BJ (cell line): ENCODE measurements at regions of chr1 and their contacts with region 1.

Region 1: DNA sequence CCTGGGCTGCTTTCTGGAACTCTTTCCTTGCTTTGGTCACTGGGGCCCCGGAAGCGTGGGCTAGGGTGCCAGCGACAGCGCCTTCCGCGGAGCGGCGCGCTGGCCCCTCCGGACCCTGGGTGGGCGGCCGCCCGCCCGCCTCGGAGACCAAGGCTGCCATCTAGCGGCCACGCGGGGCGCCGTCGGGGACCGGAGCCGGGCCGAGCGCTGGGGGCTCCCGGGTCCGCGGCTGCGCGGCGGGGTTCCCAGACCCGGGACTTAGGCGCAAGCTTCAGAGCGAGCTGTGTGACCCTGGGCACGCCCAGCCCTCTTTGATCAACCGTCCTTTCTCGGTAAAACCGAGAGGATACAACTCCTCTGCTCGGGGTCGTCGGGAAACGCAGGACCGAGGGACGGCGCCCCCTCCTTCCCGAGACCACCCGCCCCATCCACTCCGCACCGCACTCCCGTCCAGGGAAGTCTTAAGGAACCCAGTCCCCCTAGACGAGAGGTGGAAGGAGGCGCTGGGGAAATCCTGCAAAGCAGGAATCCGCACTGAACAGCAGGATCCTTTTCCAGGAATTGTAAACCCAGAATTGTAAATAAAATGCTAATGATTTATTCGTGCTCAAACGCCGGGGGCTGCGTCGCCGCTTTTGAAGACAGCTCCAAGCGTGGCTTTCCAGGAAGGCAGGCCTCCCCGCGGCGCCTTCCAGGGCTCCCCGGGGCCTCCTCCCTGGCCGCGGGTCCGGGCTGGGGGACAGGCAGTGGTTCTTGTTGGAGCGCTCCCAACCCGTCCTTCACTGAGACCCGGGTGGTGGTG is 41.2 kb downstream of the RRAGC start:
- DNase-seq: no peak
- H3K4me3 ChIP-seq: peak overlapping the region; percentile 4; the same call in 1 of the 2 replicates
- H3K27me3 ChIP-seq: peaks cover 50% of the 10 kb centered on the region
- CTCF ChIP-seq: no peak

Region 2: DNA sequence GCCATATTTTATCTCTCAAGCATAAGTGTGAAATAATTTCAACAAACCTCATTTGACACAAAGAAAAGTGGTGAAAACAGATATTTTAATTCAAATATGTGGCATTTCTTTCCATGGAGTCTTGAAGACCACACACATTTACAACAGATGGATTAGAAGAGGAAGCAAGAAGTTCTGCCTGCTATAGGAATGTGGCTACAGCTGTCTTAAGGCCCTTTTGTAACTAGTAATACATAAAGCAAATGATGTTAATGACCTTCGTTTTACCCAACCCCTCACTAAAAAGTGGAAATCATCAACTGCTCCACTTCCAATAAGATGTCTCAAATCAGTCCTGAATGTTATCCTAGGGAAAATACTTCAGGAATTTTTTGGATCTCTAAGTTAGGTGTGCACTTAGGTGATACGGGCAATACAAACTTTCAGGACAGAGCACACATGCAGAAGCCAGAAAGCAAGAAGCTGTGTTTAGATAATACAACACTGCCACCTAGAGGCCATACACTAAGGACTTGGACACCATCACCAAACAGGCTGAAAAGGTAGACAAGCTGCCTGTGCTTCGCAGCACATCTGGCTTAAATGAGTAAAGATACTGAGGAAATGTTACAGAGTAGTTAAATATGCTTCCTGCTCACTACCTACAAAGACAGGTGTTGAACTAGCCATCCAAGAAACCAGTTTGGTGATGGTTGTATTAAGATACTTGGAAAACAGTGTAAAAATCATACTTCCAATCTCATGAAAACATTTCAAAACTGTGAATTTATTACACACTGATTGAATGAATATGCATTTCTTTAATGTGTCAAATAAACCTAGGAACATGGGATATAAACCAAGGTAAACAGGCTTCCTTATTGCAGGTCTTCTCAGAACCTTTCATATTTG is 16.8 kb after region 1 on chr1:
- CTCF ChIA-PET with region 1: interaction called, 30 read pairs
- POLR2A ChIA-PET with region 1: no interaction called
- DNase-seq: peak; percentile 21
- H3K4me3 ChIP-seq: no peak overlapping the region
- H3K27me3 ChIP-seq: peaks cover 4% of the 10 kb centered on the region
- CTCF ChIP-seq: peak; percentile 73

Region 3: GRCh38 chr1:38848071-38848470 is 29.7 kb after region 1 on chr1:
- CTCF ChIA-PET with region 1: no interaction called
- POLR2A ChIA-PET with region 1: no interaction called
- DNase-seq: no peak
- H3K4me3 ChIP-seq: no peak overlapping the region
- H3K27me3 ChIP-seq: no peaks in the 10 kb centered on the region
- CTCF ChIP-seq: no peak